ENCODE measurements at regions of chr17 and their contacts with region 1.

Region 1: GRCh38 chr17:7844292-7845154 is 10.3 kb upstream of the TMEM88 start:
- DNase-seq: peak; percentile 86
- H3K4me3 Mint-ChIP-seq: peak overlapping the region; percentile 90
- H3K27ac Mint-ChIP-seq: peak overlapping the region; percentile 100
- H3K4me1 Mint-ChIP-seq: peaks cover 23% of the 10 kb centered on the region
- H3K27me3 Mint-ChIP-seq: no peaks in the 10 kb centered on the region

Region 2: DNA sequence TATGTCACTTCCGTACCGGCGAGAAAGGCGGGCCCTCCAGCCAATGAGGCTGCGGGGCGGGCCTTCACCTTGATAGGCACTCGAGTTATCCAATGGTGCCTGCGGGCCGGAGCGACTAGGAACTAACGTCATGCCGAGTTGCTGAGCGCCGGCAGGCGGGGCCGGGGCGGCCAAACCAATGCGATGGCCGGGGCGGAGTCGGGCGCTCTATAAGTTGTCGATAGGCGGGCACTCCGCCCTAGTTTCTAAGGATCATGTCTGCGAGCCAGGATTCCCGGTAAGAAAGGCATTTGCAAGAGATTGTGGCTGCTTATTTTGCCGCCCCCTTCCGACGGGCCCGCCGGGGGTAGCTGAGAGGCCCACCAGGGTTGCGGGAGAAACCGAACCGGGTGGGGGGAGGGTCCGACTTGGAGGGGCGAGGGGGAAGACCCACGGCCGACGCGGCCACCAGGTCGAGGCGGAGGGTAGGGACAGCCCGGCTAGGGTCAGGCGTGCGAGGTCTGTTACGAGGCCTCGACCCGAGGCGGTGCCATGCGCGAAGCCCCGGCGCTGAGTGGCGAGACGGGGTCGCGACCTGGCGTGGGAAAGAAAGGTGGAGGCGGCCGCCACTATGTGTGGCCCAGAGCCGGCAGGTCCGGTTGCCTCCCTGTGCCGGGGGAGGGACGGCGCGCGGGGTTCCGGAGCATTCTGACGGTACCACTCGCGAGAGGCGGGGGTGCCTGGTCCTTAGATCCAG is 271.8 kb before region 1 on chr17:
- intact Hi-C with region 1: no loop called
- DNase-seq: peak; percentile 100
- H3K4me3 Mint-ChIP-seq: peak overlapping the region; percentile 93
- H3K27ac Mint-ChIP-seq: peak overlapping the region; percentile 97
- H3K4me1 Mint-ChIP-seq: peaks cover 48% of the 10 kb centered on the region
- H3K27me3 Mint-ChIP-seq: no peaks in the 10 kb centered on the region

Region 3: GRCh38 chr17:7593296-7593695 is 251.2 kb before region 1 on chr17:
- intact Hi-C with region 1: no loop called
- DNase-seq: no peak
- H3K4me3 Mint-ChIP-seq: no peak overlapping the region
- H3K27ac Mint-ChIP-seq: no peak overlapping the region
- H3K4me1 Mint-ChIP-seq: no peaks in the 10 kb centered on the region
- H3K27me3 Mint-ChIP-seq: no peaks in the 10 kb centered on the region

Region 4: DNA sequence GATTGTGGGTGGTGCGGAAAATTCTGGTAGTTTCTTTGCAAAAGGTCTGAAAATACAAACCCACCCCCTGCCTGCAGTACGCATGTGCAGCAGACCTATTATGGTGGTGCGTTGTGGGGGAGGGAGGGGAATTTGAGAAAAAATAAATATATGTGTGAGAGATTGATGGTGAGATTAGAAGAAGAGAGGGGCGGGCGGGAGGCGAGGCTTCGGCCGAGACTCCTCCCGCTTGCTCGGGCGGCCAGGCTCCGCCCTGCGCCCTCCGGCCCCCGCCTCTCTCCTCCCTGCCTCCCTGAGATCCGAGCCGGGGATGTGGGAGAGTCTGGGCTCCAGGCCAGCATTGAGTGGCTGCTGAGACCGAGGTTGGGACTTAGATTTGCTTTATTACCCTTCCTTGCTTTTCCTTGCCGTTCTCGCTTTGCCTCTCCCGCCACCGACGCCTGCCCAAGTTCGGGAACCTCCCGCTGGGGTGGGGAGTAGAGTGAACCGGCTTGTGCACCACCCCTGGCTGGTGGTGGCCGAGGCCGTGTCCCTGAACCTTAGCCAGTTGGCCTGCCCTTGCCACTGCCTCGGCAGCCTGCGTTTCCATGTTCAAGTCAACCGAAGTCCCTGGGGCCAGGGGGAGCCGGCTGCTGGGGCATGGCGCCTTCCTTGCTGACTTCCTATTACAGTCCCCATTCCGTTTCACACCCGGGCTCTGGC is 43.1 kb after region 1 on chr17:
- intact Hi-C with region 1: loop called (anchors 1 kb)
- DNase-seq: peak; percentile 87
- H3K4me3 Mint-ChIP-seq: no peak overlapping the region
- H3K27ac Mint-ChIP-seq: no peak overlapping the region
- H3K4me1 Mint-ChIP-seq: peaks cover 8% of the 10 kb centered on the region
- H3K27me3 Mint-ChIP-seq: no peaks in the 10 kb centered on the region